Caco-2 (cell line): ENCODE measurements at regions of chr7 and their contacts with region 1.

Region 1: GRCh38 chr7:30504347-30505173 is at the start of gene GGCT:
- DNase-seq: peak; percentile 98 to 99
- H3K4me3 ChIP-seq: peak within 1 kb of the TSS; percentile 78
- H3K4me3 Mint-ChIP-seq: peak within 1 kb of the TSS; percentile 80
- H3K27ac Mint-ChIP-seq: peak within 1 kb of the TSS; percentile 80
- H3K4me1 ChIP-seq: 0 out of 2 replicates have a peak, but pooled peaks cover 1% of the 10 kb centered on the region
- H3K4me1 Mint-ChIP-seq: peaks cover 22% of the 10 kb centered on the region
- H3K27me3 ChIP-seq: no peaks in the 10 kb centered on the region
- H3K27me3 Mint-ChIP-seq: no peaks in the 10 kb centered on the region
- CTCF ChIP-seq: no peak
- total RNA-seq, gene GGCT: 75.2 and 78.7 TPM in 2 replicates

Region 2: DNA sequence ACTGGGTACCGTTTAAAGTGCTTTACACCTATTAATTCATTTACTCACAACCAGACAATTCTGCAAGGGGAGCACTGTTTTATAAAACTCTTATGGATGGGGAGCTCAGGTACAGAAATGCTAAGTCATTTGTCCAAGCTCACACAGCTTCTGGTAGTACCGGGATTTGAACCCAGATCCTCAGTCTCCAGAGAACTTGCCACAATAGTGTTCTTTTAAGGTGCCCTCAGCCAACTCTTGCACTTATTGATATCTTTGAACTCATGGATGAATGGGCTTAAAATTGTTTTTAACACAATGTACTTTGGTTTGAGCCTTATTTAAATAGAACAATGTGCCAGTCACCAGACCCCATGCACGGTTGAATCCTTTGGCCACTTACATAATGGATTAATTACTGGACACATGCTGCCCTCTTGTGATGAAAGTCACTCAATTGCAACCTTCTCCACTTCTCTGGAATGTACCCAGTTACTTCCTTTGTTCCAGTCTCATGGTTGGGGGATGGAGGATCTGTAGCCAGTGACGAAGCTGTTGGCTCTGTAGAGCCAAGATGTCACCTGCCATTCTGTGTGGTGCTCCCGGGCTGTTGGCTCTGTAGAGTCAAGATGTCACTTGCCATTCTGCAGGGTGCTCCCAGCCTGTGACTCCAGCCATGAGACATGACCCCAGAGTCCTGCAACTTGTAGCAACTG is 91.6 kb before region 1 on chr7:
- CTCF ChIA-PET with region 1: no interaction called
- POLR2A ChIA-PET with region 1: no interaction called
- intact Hi-C with region 1: no loop called
- DNase-seq: peak in 1 of 2 experiments; percentile 46
- H3K4me3 ChIP-seq: no peak overlapping the region
- H3K4me3 Mint-ChIP-seq: no peak overlapping the region
- H3K27ac Mint-ChIP-seq: no peak overlapping the region
- H3K4me1 ChIP-seq: no peaks in the 10 kb centered on the region
- H3K4me1 Mint-ChIP-seq: no peaks in the 10 kb centered on the region
- H3K27me3 ChIP-seq: no peaks in the 10 kb centered on the region
- H3K27me3 Mint-ChIP-seq: no peaks in the 10 kb centered on the region
- CTCF ChIP-seq: no peak

Region 3: DNA sequence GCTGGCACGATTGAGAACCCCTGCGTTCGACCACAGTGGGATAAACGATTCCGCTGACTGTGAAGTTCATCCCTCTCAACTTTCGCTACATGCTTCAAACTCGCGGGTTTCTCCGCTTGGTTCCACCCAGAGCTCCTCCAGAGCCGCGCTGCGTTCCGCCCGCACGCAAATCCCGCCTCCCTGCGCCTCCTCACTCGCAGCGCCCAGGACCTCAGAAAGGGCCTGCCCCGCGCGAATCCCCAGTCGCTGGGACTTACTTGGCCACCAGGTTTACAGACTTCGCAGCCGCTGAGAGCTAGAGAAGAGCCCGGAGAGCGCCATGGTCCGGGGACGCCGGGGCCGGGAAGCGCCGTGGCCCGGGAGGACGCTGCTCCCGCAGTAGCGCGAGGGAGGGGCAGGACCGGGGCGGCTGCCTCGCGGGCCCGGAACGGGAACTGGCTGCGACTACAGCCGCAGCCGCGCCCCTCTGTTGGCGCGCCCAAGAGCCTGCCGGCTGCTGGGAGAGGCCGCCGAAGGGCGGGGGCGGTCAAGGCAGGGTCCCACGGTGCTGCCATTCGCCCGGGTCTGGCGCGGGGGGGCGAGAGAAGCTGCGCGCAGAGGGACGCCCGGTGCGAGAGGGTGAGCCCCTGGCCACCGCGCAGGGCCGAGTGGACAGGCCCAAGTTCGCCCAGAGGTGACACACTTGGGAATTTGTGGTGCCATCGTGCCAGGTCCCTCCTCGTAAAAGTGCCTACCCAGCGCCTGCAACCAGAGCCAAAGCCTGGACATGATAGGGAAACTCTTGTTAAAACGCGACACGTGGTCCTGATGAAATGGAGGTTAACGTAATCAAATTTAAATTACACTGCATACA is 26.0 kb before region 1 on chr7 and contains the start of gene NOD1:
- CTCF ChIA-PET with region 1: no interaction called
- POLR2A ChIA-PET with region 1: no interaction called
- intact Hi-C with region 1: loop called (anchors 2 kb)
- DNase-seq: peak; percentile 72 to 84
- H3K4me3 ChIP-seq: peak within 1 kb of the TSS; percentile 61
- H3K4me3 Mint-ChIP-seq: peak within 1 kb of the TSS; percentile 82
- H3K27ac Mint-ChIP-seq: peak within 1 kb of the TSS; percentile 55
- H3K4me1 ChIP-seq: 0 out of 2 replicates have a peak, but pooled peaks cover 10% of the 10 kb centered on the region
- H3K4me1 Mint-ChIP-seq: peaks cover 10% of the 10 kb centered on the region
- H3K27me3 ChIP-seq: no peaks in the 10 kb centered on the region
- H3K27me3 Mint-ChIP-seq: no peaks in the 10 kb centered on the region
- CTCF ChIP-seq: peak in 1 of 2 experiments; percentile 1
- total RNA-seq, gene NOD1: 5.4 and 7.0 TPM in 2 replicates

Region 4: DNA sequence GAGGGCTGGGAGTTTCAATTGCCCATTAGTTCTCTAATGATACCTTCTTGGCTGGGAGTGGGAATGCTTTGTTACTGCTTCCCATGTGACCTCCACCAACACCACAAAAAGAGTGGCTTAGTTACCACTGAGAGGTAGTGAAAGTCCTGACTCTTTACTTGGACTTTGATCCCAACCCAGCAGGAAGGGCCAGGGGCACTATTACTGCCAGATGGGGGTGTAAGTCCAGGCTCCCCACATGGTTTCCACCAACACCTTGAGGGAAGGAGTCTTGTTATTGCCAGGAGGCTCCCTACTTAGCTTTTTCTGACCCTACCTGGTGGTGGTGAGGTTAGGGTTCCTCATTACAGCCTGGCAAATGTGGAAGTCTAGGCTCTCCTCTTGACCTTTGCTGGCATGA is 11.3 kb before region 1 on chr7:
- CTCF ChIA-PET with region 1: no interaction called
- POLR2A ChIA-PET with region 1: interaction called, 16 read pairs
- intact Hi-C with region 1: no loop called
- DNase-seq: no peak
- H3K4me3 ChIP-seq: no peak overlapping the region
- H3K4me3 Mint-ChIP-seq: no peak overlapping the region
- H3K27ac Mint-ChIP-seq: no peak overlapping the region
- H3K4me1 ChIP-seq: peaks cover 5% of the 10 kb centered on the region
- H3K4me1 Mint-ChIP-seq: no peaks in the 10 kb centered on the region
- H3K27me3 ChIP-seq: no peaks in the 10 kb centered on the region
- H3K27me3 Mint-ChIP-seq: peaks cover 4% of the 10 kb centered on the region
- CTCF ChIP-seq: no peak